MCF 10A (cell line): ENCODE measurements at regions of chr11 and their contacts with region 1.

Region 1: GRCh38 chr11:10322830-10323792 is 18.2 kb downstream of the ADM start:
- DNase-seq: peak; percentile 87
- H3K4me3 Mint-ChIP-seq: no peak overlapping the region
- H3K27ac Mint-ChIP-seq: peak overlapping the region; percentile 54
- H3K4me1 Mint-ChIP-seq: peaks cover 20% of the 10 kb centered on the region
- H3K27me3 Mint-ChIP-seq: no peaks in the 10 kb centered on the region
- CTCF ChIP-seq: peak; percentile 43

Region 2: DNA sequence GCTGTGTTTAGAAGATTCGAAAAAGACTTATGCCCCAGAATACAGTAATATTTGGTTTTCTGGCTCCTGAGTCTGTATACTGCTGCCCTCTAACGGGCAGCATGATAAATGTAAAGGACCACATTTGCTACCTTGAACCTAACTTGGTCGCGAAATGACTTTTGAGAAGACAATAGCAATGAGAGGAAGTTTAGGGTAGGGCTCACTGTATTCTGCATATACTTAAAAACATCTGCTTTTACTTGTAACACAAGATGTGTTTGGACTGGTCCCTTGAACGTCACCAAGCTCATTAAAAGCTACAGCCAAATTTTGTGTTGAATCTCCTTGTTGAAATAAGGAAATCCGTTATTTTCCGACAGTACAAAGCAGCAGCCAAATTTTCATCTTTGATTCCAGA is 350.1 kb before region 1 on chr11:
- CTCF ChIA-PET with region 1: interaction called, 24 read pairs
- POLR2A ChIA-PET with region 1: interaction called, 3 read pairs
- intact Hi-C with region 1: loop called (anchors 5 kb)
- DNase-seq: peak; percentile 60
- H3K4me3 Mint-ChIP-seq: no peak overlapping the region
- H3K27ac Mint-ChIP-seq: peak overlapping the region; percentile 8
- H3K4me1 Mint-ChIP-seq: peaks cover 6% of the 10 kb centered on the region
- H3K27me3 Mint-ChIP-seq: no peaks in the 10 kb centered on the region
- CTCF ChIP-seq: peak; percentile 76

Region 3: GRCh38 chr11:10181811-10182210 is 141.3 kb before region 1 on chr11:
- CTCF ChIA-PET with region 1: interaction called, 15 read pairs
- POLR2A ChIA-PET with region 1: no interaction called
- intact Hi-C with region 1: loop called (anchors 2 kb)
- DNase-seq: peak; percentile 30
- H3K4me3 Mint-ChIP-seq: no peak overlapping the region
- H3K27ac Mint-ChIP-seq: no peak overlapping the region
- H3K4me1 Mint-ChIP-seq: peaks cover 7% of the 10 kb centered on the region
- H3K27me3 Mint-ChIP-seq: no peaks in the 10 kb centered on the region
- CTCF ChIP-seq: peak; percentile 28

Region 4: DNA sequence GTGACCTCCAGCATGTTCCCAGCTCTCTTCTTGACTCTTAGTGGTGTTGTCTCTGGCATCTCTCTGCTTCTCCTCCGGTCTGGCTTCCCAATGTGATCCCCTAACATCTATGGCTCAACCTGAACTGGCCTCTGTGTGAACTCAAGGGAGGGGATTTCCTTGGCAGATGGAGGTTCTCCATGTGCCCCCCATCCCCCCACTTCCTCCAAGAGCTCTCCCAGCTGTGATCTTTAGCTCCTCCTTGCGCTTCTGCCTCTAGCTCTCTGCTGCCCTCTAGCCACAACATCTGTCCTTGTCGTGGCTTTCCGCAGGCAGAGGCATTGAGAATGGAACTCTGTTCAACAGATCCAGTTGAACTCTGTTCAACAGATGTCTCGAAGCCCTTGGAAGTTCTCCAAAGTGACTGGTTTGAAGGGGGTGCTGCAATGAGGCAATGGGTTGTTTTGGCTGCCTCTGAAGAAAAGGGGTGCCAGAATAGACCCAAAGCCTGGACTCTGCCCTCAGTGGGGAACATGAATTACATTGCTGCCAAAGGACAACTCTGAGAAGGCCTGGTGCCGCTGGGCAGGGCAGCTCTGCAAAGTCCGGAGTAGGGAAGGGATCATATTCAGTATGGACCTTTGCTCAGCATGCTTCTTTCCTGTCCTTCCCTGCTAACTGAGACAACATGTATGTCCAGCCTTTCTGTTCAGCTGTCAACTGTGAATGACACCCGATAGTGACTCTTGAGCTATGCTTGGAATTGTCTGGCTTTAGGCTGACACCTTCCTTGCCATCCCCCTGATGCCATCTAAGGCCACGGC is 43.7 kb after region 1 on chr11:
- CTCF ChIA-PET with region 1: interaction called, 17 read pairs
- POLR2A ChIA-PET with region 1: interaction called, 3 read pairs
- intact Hi-C with region 1: no loop called
- DNase-seq: peak; percentile 89
- H3K4me3 Mint-ChIP-seq: no peak overlapping the region
- H3K27ac Mint-ChIP-seq: peak overlapping the region; percentile 72
- H3K4me1 Mint-ChIP-seq: peaks cover 10% of the 10 kb centered on the region
- H3K27me3 Mint-ChIP-seq: no peaks in the 10 kb centered on the region
- CTCF ChIP-seq: peak; percentile 78

Region 5: GRCh38 chr11:10426475-10426874 is 103.4 kb after region 1 on chr11:
- CTCF ChIA-PET with region 1: no interaction called
- POLR2A ChIA-PET with region 1: no interaction called
- intact Hi-C with region 1: no loop called
- DNase-seq: no peak
- H3K4me3 Mint-ChIP-seq: no peak overlapping the region
- H3K27ac Mint-ChIP-seq: no peak overlapping the region
- H3K4me1 Mint-ChIP-seq: no peaks in the 10 kb centered on the region
- H3K27me3 Mint-ChIP-seq: no peaks in the 10 kb centered on the region
- CTCF ChIP-seq: no peak